Activated naive CD4-positive, alpha-beta T cell treated with anti-CD3 and anti-CD28 coated beads for 36 hours (primary cell): ENCODE measurements at regions of chr3 and their contacts with region 1.

Region 1: DNA sequence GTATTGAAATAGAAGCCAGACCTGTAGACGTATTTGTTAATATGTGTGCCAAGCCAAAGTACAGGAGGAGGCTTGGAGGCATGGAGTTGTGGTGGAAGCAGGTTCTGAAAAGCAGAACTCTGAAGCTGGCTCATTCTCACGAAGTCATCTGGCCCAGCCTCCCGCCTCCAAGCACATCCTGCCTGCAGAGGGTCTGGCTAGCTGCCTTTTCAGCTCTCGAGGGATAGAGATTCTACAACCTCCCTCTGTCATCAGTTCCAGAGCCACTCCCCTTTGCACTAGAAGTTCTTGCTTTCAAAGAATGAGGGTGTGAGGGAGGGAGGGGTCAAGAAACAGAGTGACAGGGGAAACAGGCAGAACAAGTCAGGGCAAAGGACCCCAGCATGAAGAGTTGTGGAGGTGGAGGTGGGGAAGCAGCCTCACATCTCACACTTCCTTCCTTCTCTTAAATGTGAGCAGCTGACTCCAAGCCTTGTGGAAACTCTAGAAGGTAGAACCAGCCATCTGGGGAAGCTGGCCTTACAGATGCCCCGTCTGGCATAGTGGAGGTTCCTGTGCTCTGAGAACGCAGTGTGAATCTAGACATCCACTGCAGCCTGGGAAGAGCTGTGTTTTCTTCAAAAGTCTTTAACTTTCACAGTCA is 95.3 kb downstream of the SLC49A4 start:
- DNase-seq: peak; percentile 65
- H3K4me3 Mint-ChIP-seq: no peak overlapping the region
- H3K27ac Mint-ChIP-seq: peak overlapping the region; percentile 31
- H3K4me1 Mint-ChIP-seq: peaks cover 19% of the 10 kb centered on the region
- H3K27me3 Mint-ChIP-seq: no peaks in the 10 kb centered on the region

Region 2: DNA sequence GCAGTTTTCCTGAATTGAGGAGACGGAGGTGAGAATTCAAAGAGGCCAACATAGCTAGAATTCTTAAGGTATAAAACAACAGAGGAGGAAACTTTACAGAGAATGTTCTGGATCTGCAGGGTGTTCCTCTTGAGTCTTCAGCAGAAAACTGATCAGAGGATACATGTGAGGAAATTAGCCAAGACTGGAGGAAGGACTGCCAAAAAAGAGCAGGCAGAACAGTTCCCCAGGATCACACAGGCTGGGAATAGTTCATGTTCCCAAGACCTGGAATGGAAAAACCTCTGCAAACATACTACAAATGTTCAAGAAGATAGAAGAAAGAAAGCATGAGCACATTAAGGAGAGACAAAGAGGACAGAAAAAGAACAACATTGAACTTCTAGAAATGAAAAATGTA is 87.9 kb before region 1 on chr3:
- CTCF ChIA-PET with region 1: no interaction called
- intact Hi-C with region 1: no loop called
- DNase-seq: no peak
- H3K4me3 Mint-ChIP-seq: no peak overlapping the region
- H3K27ac Mint-ChIP-seq: no peak overlapping the region
- H3K4me1 Mint-ChIP-seq: peaks cover 11% of the 10 kb centered on the region
- H3K27me3 Mint-ChIP-seq: no peaks in the 10 kb centered on the region

Region 3: GRCh38 chr3:122921791-122922651 is 31.8 kb after region 1 on chr3:
- CTCF ChIA-PET with region 1: no interaction called
- intact Hi-C with region 1: loop called (anchors 1 kb)
- DNase-seq: peak; percentile 57
- H3K4me3 Mint-ChIP-seq: no peak overlapping the region
- H3K27ac Mint-ChIP-seq: no peak overlapping the region
- H3K4me1 Mint-ChIP-seq: no peaks in the 10 kb centered on the region
- H3K27me3 Mint-ChIP-seq: peaks cover 15% of the 10 kb centered on the region

Region 4: GRCh38 chr3:123884203-123884831 is 994.1 kb after region 1 on chr3 and contains the start of gene MYLK:
- CTCF ChIA-PET with region 1: no interaction called
- intact Hi-C with region 1: no loop called
- DNase-seq: peak; percentile 53
- H3K4me3 Mint-ChIP-seq: peak within 1 kb of the TSS; percentile 67
- H3K27ac Mint-ChIP-seq: no peak within 1 kb of the TSS
- H3K4me1 Mint-ChIP-seq: peaks cover 11% of the 10 kb centered on the region
- H3K27me3 Mint-ChIP-seq: peaks cover 57% of the 10 kb centered on the region
- total RNA-seq, gene MYLK: not detected